ENCODE measurements at regions of chr3 and their contacts with region 1.

Region 1: GRCh38 chr3:158205994-158206393 is 96.1 kb downstream of the RSRC1 start:
- DNase-seq: no peak
- ATAC-seq: no peak
- H3K4me3 ChIP-seq: no peak overlapping the region
- H3K27ac ChIP-seq: no peak overlapping the region
- H3K4me1 ChIP-seq: no peaks in the 10 kb centered on the region
- H3K27me3 ChIP-seq: no peaks in the 10 kb centered on the region
- CTCF ChIP-seq: no peak
- POLR2A ChIP-seq: no peak
- RAD21 ChIP-seq: no peak

Region 2: GRCh38 chr3:158264894-158265293 is 58.9 kb after region 1 on chr3:
- CTCF ChIA-PET with region 1: no interaction called
- POLR2A ChIA-PET with region 1: no interaction called
- dilution Hi-C with region 1: no loop called
- in situ Hi-C with region 1: no loop called
- intact Hi-C with region 1: loop called (anchors 2 kb)
- DNase-seq: no peak
- ATAC-seq: no peak
- H3K4me3 ChIP-seq: no peak overlapping the region
- H3K27ac ChIP-seq: no peak overlapping the region
- H3K4me1 ChIP-seq: no peaks in the 10 kb centered on the region
- H3K27me3 ChIP-seq: no peaks in the 10 kb centered on the region
- CTCF ChIP-seq: no peak
- POLR2A ChIP-seq: no peak
- RAD21 ChIP-seq: no peak

Measured in IMR-90 (cell line).